Astrocyte of the cerebellum (primary cell): ENCODE measurements at regions of chr20 and their contacts with region 1.

Region 1: DNA sequence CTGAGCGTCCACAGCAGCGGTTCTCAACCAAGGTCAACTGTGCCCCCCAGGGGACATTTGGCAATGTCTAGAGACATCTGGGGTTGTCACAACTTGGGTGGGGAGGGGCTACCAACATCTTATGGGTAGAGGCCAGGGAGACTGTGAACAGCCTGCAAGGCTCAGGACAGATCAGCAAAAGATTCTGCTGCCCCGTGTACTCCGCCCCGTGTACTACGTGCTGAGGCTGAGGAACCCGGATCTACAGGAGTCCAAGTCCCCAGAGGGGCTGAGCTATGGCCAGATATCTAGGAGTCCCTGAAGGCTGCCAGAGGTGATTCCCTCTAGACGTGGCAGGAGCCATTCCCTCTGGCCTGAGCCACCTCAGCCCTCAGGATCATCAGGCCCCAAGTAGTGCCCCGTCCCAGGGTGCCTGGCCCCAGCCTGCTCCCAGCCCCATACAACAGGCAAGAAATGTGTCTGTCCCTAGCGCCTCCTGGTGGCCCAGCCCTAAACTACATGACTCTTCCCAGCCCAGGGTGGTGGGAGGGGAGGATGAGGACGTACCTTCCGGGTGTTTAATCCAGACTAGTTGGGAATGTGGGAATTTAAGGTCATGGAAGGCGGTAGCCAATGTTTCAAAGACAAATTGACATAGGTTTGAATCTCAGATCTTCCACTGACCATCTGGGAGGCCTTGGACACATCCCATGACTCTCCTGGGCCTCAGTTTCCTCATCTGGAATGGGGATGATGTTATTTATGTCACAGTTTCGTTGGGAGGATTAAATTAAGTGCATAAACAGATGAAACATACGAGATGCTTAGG is 49.5 kb upstream of the PTPN1 start:
- DNase-seq: no peak
- H3K4me3 ChIP-seq: no peak overlapping the region
- CTCF ChIP-seq: peak; percentile 90

Region 2: DNA sequence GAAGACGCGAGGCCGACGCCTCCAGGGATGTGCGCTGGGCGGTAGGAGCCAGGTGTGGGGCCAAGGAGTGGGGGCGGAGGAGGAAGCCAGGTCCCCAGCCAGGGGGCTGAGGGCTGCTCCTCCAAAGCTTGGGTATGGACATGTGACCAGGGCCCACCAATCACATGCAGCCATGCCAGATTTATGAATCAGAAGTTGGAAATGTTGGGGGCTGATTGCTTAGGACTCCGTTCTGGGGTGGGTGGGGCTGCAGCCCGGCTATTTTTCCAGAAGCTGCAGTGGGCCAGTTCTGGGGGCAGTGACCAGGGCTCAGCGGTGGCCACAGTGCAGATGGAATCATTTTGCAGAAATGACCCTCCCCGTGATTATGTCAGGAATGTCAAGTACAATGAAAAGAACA is 174.1 kb before region 1 on chr20:
- in situ Hi-C with region 1: loop called (anchors 10 kb)
- DNase-seq: peak; percentile 66
- H3K4me3 ChIP-seq: no peak overlapping the region
- CTCF ChIP-seq: no peak

Region 3: DNA sequence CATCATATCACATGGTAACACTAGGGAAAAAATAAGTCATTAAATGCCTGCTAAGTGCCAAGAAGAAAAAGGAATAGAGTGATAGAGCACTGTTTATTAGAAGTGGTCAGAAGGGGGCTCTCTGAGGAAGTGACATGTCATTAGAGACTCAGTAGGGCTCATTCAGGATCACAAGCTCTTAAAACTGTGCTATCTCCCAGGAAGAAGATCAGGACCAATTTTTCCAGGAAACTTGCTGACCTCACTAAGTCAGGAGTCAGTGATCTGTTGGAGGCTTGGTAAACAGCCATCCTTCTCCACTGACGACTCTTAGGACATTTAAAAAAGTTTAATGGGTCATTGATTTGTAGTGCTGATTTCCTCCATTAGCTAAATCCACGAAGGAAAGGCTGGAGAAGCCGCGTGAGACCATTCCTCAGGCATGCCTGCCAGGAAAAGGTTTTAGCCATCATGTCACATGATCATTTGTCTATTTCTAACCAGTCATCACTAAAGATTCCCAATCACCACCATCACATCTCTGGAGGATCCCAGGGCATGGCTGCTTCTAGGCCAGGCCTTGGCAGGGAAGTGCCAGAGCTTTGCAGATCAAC is 43.7 kb after region 1 on chr20:
- in situ Hi-C with region 1: no loop called
- DNase-seq: no peak
- H3K4me3 ChIP-seq: no peak overlapping the region
- CTCF ChIP-seq: peak; percentile 9